Ascending aorta (tissue), 2 donors: ENCODE measurements at regions of chr1 and their contacts with region 1.

Region 1: DNA sequence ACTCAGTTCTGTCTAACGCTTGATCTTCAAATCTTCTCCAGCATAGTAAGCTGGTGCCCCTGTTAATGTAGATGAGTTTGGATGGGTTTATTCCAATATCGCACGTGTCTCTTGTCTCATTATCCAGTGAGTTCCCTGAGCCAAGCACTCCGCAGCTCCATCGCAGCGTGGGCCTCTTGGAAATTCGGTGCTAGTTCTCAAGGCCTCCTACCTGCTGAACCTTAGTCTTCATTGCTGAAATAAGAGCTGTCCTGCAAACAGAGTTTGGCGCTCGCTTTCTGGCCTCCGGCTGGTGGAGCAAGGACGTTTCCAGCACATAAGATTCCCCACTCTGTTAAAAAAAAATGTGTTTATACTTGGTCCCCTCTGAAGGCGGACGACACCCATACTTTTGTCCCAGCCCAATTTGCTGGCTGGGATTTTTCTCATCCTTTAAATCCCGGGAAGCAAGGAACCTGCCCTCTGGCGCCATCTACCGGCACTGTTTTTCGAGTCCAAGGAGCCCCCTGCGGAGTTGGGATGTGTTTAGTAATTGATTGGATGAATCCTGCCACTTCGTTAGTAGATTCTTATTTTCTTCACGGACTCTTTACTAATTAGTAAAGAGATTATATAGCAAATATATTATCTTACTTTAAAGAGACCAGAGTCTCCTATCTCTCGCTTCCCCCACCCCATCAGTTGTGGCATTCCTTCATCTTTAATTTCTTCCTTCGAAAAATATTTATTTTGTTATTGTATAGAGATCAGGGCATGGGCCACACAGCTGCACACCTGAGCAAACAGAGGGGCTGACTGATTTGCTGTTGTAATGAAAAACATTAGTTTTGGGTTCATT is 14.7 kb downstream of the JUN start:
- DNase-seq: peak in 1 of 2 donors; percentile 87
- H3K4me3 ChIP-seq: no peak overlapping the region
- H3K27ac ChIP-seq: peak overlapping the region in 1 of 2 donors; percentile 24
- H3K4me1 ChIP-seq: peaks cover 3 to 24% of the 10 kb centered on the region in 2 donors
- H3K27me3 ChIP-seq: no peaks in the 10 kb centered on the region
- CTCF ChIP-seq: peak; percentile 74 to 87 (median 78)

Region 2: DNA sequence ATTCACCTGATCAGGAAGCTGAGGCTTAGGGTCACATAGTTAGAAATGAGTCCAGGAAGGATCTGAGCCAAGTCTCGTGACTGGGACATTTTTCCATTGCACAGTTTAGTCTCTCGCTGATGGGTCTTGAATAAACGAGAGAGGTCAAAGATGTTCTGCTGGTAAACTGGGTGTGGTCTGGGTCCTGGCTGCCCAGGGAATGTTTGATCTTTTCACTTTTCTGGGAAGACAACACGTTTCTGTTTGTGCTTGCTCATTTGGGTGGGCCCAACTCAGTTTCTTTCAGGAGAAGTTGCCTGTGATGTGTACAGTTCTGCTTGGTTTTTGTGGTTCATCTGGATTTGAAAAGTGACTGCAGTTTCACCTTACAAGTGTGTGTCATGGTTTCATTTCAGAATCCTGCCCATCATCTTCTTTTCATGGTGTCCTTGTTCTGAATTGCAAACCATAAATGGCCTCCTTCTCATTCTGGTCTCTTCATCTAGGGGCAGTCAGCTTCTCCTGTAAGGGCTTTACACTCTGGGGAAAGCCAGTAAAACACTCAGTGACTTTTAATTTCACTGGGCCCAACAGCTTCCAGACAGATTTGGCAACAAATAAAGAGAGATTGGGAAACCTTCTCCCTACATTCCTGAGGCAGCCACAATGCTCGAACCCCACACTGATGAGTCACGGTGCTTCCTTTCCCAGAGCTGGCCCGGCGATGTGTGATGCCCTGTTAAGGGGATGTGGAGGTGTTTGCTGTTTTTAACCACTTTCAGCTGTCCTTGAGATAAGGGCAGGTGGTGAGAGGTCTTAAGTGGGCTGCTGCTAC is 184.9 kb before region 1 on chr1:
- intact Hi-C with region 1: loop called (anchors 10 kb)
- DNase-seq: peak; percentile 59 to 94
- H3K4me3 ChIP-seq: no peak overlapping the region
- H3K27ac ChIP-seq: peak overlapping the region; percentile 71 to 89
- H3K4me1 ChIP-seq: peaks cover 7 to 25% of the 10 kb centered on the region in 2 donors
- H3K27me3 ChIP-seq: no peaks in the 10 kb centered on the region
- CTCF ChIP-seq: no peak

Region 3: DNA sequence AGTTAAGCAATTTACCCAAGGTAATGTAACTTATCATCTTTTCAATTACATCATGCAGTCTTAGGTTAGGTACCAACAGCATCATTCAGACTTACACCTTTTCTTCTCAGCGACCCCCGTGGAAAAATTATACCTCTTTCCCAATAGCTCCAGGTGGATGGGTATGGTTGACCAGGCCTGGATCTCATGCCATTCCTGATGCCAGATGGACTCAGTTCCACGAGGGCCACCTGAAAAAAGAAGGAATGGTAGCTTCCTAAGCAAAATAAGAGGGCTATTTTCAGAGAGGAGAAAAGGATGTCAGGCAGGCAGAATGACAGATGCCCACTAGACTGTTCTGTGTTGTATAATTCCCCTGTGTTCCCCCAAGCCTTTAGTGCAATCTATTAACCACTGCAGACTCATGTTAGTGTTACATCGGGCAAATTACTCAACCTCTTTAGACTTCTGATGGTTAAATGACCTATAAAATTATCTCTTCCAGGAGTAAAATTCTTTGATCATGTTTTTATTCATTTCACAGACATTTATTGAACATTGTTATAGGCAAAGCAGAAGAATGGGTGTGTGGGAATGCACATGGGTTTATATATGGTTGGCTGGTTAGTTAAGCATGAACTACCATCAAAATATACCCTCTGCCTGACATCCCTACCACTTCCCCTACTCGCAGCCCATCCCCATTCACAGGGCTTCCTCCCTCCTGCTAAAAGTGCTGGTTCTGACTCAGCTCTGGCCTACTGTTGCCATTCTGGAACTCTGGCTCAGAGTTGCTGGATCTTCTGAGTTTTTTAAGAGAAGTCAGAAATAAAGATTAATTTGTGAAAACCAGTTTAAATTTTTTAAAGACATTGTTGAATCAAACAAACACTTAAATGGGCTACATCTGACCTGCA is 58.8 kb before region 1 on chr1:
- intact Hi-C with region 1: no loop called
- DNase-seq: no peak
- H3K4me3 ChIP-seq: no peak overlapping the region
- H3K27ac ChIP-seq: no peak overlapping the region
- H3K4me1 ChIP-seq: no peaks in the 10 kb centered on the region
- H3K27me3 ChIP-seq: no peaks in the 10 kb centered on the region
- CTCF ChIP-seq: no peak

Region 4: DNA sequence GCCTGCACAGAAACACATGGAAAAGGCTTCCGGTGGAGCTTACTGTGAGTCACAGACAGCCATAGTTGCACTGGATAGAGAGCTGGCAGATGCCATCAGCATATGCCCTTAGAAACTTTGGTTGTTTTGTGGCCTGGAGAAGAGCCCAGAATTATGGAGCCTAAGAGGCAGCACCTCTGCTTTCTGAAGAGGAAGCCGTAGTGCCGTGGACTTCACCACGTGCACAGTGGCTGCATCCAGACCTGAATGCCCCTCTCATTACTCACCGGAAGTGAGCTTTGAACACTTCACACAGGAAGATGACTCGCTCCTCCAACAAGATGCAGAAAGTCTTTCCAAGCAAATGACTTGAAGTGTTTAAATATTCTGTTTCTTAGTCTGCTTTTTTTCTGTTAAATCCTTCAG is 13.7 kb before region 1 on chr1:
- intact Hi-C with region 1: loop called (anchors 1 kb)
- DNase-seq: peak; percentile 78 to 93
- H3K4me3 ChIP-seq: peak overlapping the region in 1 of 2 donors; percentile 21
- H3K27ac ChIP-seq: peak overlapping the region; percentile 77 to 81
- H3K4me1 ChIP-seq: peaks cover 4 to 23% of the 10 kb centered on the region in 2 donors
- H3K27me3 ChIP-seq: no peaks in the 10 kb centered on the region
- CTCF ChIP-seq: no peak